MCF 10A (cell line): ENCODE measurements at regions of chr1 and their contacts with region 1.

Region 1: GRCh38 chr1:33295450-33296081 is 25.3 kb downstream of the A3GALT2 start:
- DNase-seq: peak; percentile 85
- H3K4me3 Mint-ChIP-seq: no peak overlapping the region
- H3K27ac Mint-ChIP-seq: no peak overlapping the region
- H3K4me1 Mint-ChIP-seq: no peaks in the 10 kb centered on the region
- H3K27me3 Mint-ChIP-seq: no peaks in the 10 kb centered on the region
- CTCF ChIP-seq: peak; percentile 91

Region 2: GRCh38 chr1:33219881-33220661 is 75.5 kb before region 1 on chr1:
- CTCF ChIA-PET with region 1: interaction called, 67 read pairs
- POLR2A ChIA-PET with region 1: no interaction called
- intact Hi-C with region 1: loop called (anchors 1 kb)
- DNase-seq: peak; percentile 84
- H3K4me3 Mint-ChIP-seq: no peak overlapping the region
- H3K27ac Mint-ChIP-seq: peak overlapping the region; percentile 95
- H3K4me1 Mint-ChIP-seq: peaks cover 40% of the 10 kb centered on the region
- H3K27me3 Mint-ChIP-seq: no peaks in the 10 kb centered on the region
- CTCF ChIP-seq: no peak

Region 3: DNA sequence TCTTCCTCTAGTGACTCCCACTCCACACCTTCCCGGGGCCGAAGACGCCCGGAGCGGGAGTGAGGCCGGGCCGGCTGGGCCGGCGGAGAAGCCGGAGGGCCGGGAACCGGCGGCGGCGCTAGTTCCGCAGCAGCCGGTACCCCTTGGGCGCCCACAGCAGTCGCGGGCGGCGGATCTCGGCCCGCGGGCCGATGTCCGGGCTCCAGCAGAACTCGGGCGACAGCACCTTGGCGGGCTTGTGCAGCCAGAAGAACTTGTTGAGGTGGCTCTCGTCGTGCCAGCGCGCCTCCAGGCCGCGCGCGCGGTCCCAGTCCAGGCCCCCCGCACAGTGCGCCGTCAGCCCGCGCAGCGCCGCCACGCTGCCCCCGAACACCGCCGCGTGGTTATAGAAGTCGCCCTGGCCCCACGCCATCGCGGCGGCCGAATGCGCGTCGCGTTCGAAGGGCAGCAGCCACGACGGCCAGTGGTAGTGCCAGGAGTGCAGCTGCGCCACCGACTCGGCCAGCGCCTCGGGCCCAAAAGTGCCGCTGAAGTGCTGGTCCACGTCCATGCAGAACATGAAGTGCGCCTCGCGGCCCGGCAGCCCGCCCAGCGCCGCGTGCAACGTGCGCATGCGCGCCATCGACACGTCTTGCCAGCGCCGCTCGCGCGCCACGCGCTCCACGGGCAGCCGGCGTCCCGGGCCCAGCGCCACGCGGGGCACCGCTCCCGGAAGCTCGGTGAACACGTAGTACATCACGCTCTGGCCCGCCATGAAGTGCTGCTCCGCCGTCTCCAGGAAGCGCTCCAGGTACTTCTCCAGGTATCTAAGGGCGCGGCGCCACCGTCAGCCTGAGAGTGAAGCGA is 11.3 kb after region 1 on chr1:
- CTCF ChIA-PET with region 1: interaction called, 33 read pairs
- POLR2A ChIA-PET with region 1: no interaction called
- intact Hi-C with region 1: no loop called
- DNase-seq: no peak
- H3K4me3 Mint-ChIP-seq: no peak overlapping the region
- H3K27ac Mint-ChIP-seq: no peak overlapping the region
- H3K4me1 Mint-ChIP-seq: no peaks in the 10 kb centered on the region
- H3K27me3 Mint-ChIP-seq: no peaks in the 10 kb centered on the region
- CTCF ChIP-seq: no peak

Region 4: DNA sequence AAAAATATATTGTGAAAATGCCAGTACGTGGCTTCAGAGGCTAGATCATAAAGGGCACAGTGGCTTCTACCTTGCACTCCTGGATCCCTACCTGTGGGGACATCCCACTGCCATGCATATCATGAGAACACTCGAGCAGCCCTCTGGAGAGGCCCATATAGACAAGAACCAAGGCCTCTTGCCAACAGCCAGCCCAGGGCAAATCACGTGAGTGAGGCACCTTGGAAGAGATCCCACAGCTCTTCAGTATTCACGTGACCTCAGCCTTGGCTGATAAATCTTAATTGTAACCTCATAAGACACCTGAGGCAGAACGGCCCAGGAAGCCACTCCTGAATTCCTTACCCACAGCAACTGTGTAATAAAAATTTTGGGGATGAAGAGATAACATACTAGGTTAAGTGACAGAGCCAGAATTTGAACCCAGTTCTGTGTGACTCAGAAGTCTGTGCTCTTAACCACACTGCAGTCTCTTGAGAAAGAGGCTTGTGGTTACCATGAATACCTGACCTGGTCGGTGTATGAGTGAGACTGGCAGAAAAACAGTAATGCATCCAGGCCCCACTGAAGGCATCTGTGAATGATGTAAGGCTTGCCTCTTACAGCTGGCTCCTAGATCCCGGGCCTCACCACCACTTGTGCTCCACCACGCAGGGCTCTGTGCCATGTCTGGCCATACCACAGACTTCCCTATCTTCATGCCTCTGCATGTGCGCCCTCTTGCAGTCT is 32.2 kb after region 1 on chr1:
- CTCF ChIA-PET with region 1: interaction called, 21 read pairs
- POLR2A ChIA-PET with region 1: interaction called, 4 read pairs
- intact Hi-C with region 1: no loop called
- DNase-seq: peak; percentile 98
- H3K4me3 Mint-ChIP-seq: no peak overlapping the region
- H3K27ac Mint-ChIP-seq: peak overlapping the region; percentile 84
- H3K4me1 Mint-ChIP-seq: peaks cover 51% of the 10 kb centered on the region
- H3K27me3 Mint-ChIP-seq: no peaks in the 10 kb centered on the region
- CTCF ChIP-seq: no peak

Region 5: DNA sequence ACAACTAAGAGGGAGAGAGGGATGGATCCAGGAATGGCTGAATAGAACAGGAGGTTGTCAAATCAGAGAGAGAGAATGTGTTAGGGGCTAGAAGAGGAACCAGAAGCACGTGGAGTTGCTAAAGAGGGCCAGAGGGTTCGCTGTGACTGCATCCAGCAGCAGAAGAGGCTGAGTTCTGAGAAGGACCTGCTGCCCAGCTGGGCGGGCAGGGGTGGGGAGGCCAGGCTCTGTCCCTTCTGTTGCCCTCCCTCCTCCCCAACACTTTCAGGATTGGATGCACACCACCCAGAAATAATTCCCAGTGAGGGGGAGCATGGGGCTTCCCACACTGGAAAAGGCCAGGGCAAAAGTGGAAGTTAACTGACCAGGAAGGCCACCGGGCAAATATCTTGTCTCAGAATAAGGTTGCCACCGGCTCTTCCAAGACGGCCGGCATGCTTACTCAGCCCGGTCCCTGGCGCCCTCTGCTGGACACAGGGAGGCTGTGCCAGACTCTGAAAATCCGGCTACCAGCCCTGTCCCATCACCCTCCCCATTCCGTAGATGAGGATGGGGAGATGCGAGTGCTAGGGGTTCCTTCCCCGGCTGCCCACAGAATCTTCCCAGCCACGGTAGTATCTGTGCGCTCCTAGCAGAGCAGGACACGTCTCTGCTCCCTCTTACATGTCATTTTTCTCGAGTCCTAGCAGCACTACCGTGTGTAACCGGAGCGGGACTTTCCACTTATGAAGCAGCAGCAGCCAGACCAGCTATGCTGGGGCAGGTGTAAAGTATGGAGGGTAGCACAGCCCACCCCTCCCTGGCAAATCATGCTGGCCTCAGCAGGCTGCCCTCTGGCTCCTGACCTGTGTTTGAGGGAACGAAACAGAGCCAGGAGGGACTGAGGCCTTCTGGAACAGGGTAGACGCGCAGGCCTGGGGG is 72.2 kb after region 1 on chr1:
- CTCF ChIA-PET with region 1: interaction called, 180 read pairs
- POLR2A ChIA-PET with region 1: interaction called, 3 read pairs
- intact Hi-C with region 1: loop called (anchors 1 kb)
- DNase-seq: peak; percentile 84
- H3K4me3 Mint-ChIP-seq: no peak overlapping the region
- H3K27ac Mint-ChIP-seq: no peak overlapping the region
- H3K4me1 Mint-ChIP-seq: peaks cover 6% of the 10 kb centered on the region
- H3K27me3 Mint-ChIP-seq: no peaks in the 10 kb centered on the region
- CTCF ChIP-seq: peak; percentile 95

Region 6: GRCh38 chr1:33472349-33472980 is 176.9 kb after region 1 on chr1 and contains the start of gene ZSCAN20:
- CTCF ChIA-PET with region 1: interaction called, 152 read pairs
- POLR2A ChIA-PET with region 1: interaction called, 7 read pairs
- intact Hi-C with region 1: loop called (anchors 1 kb)
- DNase-seq: peak; percentile 98
- H3K4me3 Mint-ChIP-seq: peak within 1 kb of the TSS; percentile 87
- H3K27ac Mint-ChIP-seq: peak within 1 kb of the TSS; percentile 98
- H3K4me1 Mint-ChIP-seq: peaks cover 24% of the 10 kb centered on the region
- H3K27me3 Mint-ChIP-seq: no peaks in the 10 kb centered on the region
- CTCF ChIP-seq: no peak
- total RNA-seq, gene ZSCAN20: 5.1 and 8.2 TPM in 2 replicates